ENCODE measurements at regions of chr1 and their contacts with region 1.

Region 1: GRCh38 chr1:206663832-206664652 is 20.7 kb upstream of the MAPKAPK2 start:
- DNase-seq: peak; percentile 79
- ATAC-seq: peak; percentile 81
- H3K4me3 Mint-ChIP-seq: no peak overlapping the region
- H3K27ac Mint-ChIP-seq: no peak overlapping the region
- H3K4me1 Mint-ChIP-seq: peaks cover 28% of the 10 kb centered on the region
- H3K27me3 Mint-ChIP-seq: peaks cover 32% of the 10 kb centered on the region

Region 2: GRCh38 chr1:206489980-206490770 is 173.9 kb before region 1 on chr1:
- CTCF ChIA-PET with region 1: interaction called, 108 read pairs
- DNase-seq: peak; percentile 79
- ATAC-seq: peak; percentile 81
- H3K4me3 Mint-ChIP-seq: no peak overlapping the region
- H3K27ac Mint-ChIP-seq: no peak overlapping the region
- H3K4me1 Mint-ChIP-seq: peaks cover 19% of the 10 kb centered on the region
- H3K27me3 Mint-ChIP-seq: no peaks in the 10 kb centered on the region

Region 3: GRCh38 chr1:206583707-206584648 is 80.1 kb before region 1 on chr1:
- CTCF ChIA-PET with region 1: interaction called, 15 read pairs
- DNase-seq: peak; percentile 88
- ATAC-seq: peak; percentile 24
- H3K4me3 Mint-ChIP-seq: peak overlapping the region; percentile 10
- H3K27ac Mint-ChIP-seq: peak overlapping the region; percentile 95
- H3K4me1 Mint-ChIP-seq: peaks cover 93% of the 10 kb centered on the region
- H3K27me3 Mint-ChIP-seq: no peaks in the 10 kb centered on the region

Region 4: GRCh38 chr1:206612129-206612876 is 51.7 kb before region 1 on chr1 and contains the start of gene EIF2D:
- CTCF ChIA-PET with region 1: interaction called, 49 read pairs
- DNase-seq: peak; percentile 95
- ATAC-seq: peak; percentile 98
- H3K4me3 Mint-ChIP-seq: peak within 1 kb of the TSS; percentile 87
- H3K27ac Mint-ChIP-seq: peak within 1 kb of the TSS; percentile 93
- H3K4me1 Mint-ChIP-seq: peaks cover 40% of the 10 kb centered on the region
- H3K27me3 Mint-ChIP-seq: peaks cover 6% of the 10 kb centered on the region
- total RNA-seq, gene EIF2D: 51.7 to 68.4 TPM

Region 5: GRCh38 chr1:206684478-206685333 is 20.7 kb after region 1 on chr1 and contains the start of gene MAPKAPK2:
- CTCF ChIA-PET with region 1: interaction called, 48 read pairs
- DNase-seq: peak; percentile 80
- ATAC-seq: peak; percentile 80
- H3K4me3 Mint-ChIP-seq: peak within 1 kb of the TSS; percentile 96
- H3K27ac Mint-ChIP-seq: peak within 1 kb of the TSS; percentile 95
- H3K4me1 Mint-ChIP-seq: peaks cover 40% of the 10 kb centered on the region
- H3K27me3 Mint-ChIP-seq: peaks cover 10% of the 10 kb centered on the region
- total RNA-seq, gene MAPKAPK2: 85.7 to 93.8 TPM

Region 6: DNA sequence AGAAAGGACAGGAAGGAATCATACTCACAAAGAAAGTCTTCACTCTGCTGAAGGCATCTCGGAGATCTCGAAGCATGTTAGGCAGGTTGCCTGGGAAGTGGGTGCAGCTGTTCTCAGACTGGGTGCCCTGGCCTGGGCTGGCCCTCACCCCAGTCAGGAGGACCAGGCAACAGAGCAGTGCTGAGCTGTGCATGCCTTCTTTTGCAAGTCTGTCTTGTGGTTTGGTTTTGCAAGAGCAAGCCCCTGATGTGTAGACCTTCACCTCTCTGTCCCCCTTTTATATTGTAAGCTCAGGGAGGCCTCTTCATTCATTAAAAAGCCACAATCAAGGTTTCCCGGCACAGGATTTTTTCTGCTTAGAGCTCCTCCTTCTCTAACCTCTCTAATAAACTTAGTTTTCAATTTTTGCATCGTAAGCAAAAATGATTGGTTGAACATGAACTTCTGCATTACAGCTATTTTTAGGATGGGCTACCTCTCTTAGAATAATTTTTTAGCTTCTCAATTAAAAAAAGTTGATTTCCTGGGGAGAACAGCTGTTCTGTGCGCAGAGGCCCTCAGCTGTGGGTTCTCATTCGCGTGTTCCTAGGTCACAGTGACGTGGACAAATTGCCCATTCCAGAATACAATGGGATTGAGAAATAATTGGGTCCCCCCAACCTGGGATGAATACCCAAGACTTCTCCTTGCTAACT is 108.3 kb after region 1 on chr1 and contains the start of gene IL10:
- CTCF ChIA-PET with region 1: no interaction called
- DNase-seq: no peak
- ATAC-seq: no peak
- H3K4me3 Mint-ChIP-seq: peak within 1 kb of the TSS; percentile 4
- H3K27ac Mint-ChIP-seq: peak within 1 kb of the TSS; percentile 0
- H3K4me1 Mint-ChIP-seq: peaks cover 64% of the 10 kb centered on the region
- H3K27me3 Mint-ChIP-seq: peaks cover 47% of the 10 kb centered on the region
- total RNA-seq, gene IL10: not detected

Region 7: DNA sequence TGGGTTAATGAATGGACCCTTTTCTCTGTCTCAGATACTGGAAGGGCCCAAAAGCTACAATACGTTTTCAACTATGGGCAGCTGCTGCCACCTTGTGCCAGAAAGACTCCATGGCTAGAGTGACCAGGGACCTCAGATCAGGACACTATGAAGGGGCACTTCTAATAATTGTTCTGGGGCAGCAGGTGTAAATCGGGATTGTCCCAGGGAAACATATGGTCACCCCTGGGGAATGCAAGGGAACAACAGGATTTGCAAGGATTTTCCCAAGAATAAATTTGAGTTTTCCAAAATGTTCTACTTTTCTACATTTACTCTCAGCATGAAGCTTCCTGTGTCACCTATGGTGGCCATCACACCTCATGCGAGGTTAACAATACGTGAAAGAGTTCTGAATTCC is 318.2 kb after region 1 on chr1:
- CTCF ChIA-PET with region 1: interaction called, 10 read pairs
- DNase-seq: peak; percentile 74
- ATAC-seq: peak; percentile 85
- H3K4me3 Mint-ChIP-seq: no peak overlapping the region
- H3K27ac Mint-ChIP-seq: no peak overlapping the region
- H3K4me1 Mint-ChIP-seq: no peaks in the 10 kb centered on the region
- H3K27me3 Mint-ChIP-seq: peaks cover 40% of the 10 kb centered on the region